ENCODE measurements at regions of chr5 and their contacts with region 1.

Region 1: DNA sequence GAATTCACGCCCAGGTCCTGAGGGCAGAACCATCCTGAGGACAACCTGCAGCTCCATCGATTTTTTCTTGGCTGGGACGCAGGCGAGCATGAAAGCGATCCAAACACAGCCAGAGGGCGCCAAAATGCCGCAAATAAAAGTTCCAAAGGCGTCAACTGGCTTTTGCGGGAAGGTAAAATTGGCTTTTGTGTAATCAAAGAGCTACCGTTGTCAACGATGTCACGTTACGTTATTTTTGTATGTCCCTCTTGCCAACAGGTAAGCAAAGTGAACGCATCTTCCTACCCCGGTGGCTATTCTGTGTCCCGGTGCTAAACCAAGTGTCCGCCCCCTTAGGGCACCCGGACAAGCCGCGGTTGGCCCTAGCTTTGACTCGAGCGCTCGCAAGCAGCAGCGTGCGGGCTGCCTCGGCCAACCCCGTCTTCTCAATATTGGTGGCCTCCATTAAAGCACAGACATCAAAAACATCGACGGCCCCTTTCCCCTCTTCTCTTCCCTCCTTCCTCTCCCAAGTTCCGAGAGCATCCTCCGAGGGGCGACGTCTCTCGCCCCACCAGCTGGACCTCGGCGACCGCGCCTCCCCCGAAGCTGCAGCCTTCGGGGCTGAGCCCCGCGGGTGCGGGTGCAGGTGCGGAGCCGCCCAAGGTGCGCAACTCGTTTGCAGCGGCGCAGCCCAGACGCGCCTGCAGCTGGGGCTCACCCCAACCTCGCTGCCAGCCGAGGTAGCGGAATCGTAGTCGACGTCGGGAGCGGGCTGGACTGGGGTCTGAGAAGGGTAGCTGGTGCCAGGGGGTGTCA is 1.1 kb upstream of the BASP1 start:
- DNase-seq: peak; percentile 54 to 70
- ATAC-seq: peak; percentile 22 to 82 (median 66)
- H3K4me3 ChIP-seq: peak overlapping the region in 5 of 10 donors; percentile 1 to 70 (median 31)
- H3K27ac ChIP-seq: peak overlapping the region in 1 of 10 donors; percentile 74
- H3K4me1 ChIP-seq: peaks cover 0 to 21% (median 17%) of the 10 kb centered on the region in 9 donors
- H3K27me3 ChIP-seq: peaks cover 0 to 77% (median 60%) of the 10 kb centered on the region in 7 donors
- CTCF ChIP-seq: peak; percentile 51 to 82 (median 72)

Region 2: DNA sequence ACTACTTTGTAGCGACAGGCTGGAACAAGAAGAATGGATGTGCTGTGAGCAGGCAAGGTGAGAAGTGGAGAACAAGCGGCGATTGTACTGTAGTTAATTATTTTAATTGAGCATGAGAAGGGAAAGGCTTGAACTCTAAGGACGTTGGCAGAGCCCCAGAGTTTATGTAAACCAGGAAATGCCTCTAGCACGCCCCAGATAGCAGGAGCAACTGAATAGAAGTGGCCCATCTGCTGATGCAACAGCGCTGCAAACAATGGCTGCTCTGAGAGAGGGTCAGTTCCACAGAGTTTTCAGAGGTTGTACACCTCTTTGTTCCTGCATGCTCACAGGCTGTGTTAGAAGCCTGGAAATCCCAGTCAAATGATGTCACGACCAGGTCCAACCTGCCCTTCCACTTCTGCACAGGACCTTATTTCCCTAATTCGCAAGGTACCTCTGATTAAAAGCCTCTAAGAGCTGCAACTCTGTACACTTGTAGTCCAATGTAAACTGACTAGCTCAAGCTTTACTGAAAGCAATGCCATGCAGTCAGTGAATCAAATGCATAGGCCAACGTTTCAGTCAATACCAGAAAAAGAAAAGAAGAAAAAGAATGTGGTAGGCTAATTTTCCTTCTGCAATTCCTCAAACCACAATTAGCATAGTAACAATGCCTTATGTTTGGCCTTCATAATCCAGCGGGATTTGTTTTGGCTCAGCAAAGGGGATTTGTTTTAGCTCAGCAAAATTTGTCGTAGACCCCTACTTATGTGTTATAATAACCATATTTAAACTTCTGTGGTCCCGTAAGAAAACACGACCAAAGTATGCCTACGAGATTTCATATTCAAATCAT is 480.0 kb before region 1 on chr5:
- intact Hi-C with region 1: no loop called
- DNase-seq: peak in 1 of 2 donors; percentile 23
- ATAC-seq: peak in 6 of 8 donors; percentile 51 to 75 (median 67)
- H3K4me3 ChIP-seq: no peak overlapping the region
- H3K27ac ChIP-seq: no peak overlapping the region
- H3K4me1 ChIP-seq: peaks cover 0 to 33% (median 19%) of the 10 kb centered on the region in 9 donors
- H3K27me3 ChIP-seq: peaks cover 0 to 13% (median 0%) of the 10 kb centered on the region in 7 donors
- CTCF ChIP-seq: no peak

Region 3: GRCh38 chr5:18305297-18305924 is 1089.0 kb after region 1 on chr5:
- intact Hi-C with region 1: loop called in 5 of 10 experiments (anchors 2 to 10 kb)
- DNase-seq: no peak
- ATAC-seq: no peak
- H3K4me3 ChIP-seq: no peak overlapping the region
- H3K27ac ChIP-seq: no peak overlapping the region
- H3K4me1 ChIP-seq: no peaks in the 10 kb centered on the region
- H3K27me3 ChIP-seq: peaks cover 0 to 11% (median 4%) of the 10 kb centered on the region in 7 donors
- CTCF ChIP-seq: peak in 8 of 9 donors; percentile 16 to 61 (median 52)

Region 4: DNA sequence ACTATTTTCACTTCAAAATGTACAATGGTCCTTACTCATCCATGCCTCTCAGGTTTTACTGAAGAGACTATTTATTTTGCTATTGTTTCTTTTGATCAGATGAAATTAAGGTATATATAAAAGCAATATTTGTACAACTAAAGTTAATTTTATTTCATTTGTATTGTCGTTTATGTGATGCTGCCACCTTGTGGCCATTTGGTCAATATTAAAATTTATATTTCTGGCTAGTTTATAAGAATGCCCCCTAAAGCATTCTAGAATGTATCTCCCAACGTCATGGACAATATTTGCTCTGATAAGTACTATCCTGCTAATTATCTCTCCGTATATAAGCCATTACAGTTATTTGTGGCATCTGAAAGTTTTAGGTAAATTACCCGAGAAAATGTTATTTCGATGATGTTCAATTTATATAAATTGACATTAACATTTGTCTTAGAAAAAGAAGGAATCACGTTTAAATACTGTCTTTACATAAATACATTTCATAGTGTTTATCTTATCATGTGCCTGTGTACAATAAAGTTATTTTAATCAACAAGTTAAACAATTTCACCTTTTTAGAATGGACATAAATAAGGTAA is 1097.9 kb after region 1 on chr5:
- intact Hi-C with region 1: loop called in 9 of 10 experiments (anchors 2 to 10 kb)
- DNase-seq: no peak
- ATAC-seq: no peak
- H3K4me3 ChIP-seq: no peak overlapping the region
- H3K27ac ChIP-seq: no peak overlapping the region
- H3K4me1 ChIP-seq: no peaks in the 10 kb centered on the region
- H3K27me3 ChIP-seq: peaks cover 0 to 7% (median 0%) of the 10 kb centered on the region in 7 donors
- CTCF ChIP-seq: peak; percentile 20 to 69 (median 57)